ENCODE measurements at regions of chr12 and their contacts with region 1.

Region 1: DNA sequence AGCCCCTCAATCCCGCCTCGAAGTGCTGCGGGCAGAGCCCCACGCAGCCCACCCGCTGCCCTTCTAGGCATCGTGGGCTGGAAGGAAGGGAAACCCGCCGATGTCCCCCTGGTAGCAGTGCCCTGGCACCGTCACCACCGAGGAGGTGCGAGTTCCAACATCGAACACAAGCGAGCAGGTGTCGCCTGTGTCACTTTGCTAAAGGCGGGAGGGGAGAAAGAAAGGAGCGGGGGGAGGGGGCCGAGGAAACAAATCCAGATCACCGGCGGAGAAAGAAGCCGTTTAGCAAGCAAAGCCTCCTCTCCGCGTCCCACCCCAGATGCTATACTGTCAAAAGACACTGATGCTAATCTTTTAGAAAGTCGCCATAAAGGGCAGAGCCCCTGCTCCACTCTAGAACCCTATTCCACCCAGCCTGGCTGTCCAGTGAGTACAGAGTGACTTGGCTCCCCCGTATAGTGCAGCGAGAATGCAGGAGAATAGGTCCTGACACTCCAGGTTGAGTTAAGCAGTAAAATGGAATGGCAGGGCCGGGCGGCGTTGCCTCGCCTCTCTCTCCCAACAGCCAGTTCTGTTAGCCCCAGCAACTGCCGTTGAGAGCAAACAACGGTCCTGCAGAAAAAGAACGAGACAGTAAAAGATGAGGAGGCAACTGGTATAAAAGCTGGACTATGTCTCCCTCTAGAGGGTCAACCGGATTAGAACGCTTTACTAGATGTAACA is 67.9 kb upstream of the USP15 start:
- DNase-seq: peak in 1 of 2 donors; percentile 47
- ATAC-seq: peak; percentile 58 to 93 (median 88)
- H3K4me3 ChIP-seq: peak overlapping the region; percentile 16 to 51 (median 36)
- H3K27ac ChIP-seq: no peak overlapping the region
- H3K4me1 ChIP-seq: peaks cover 15 to 30% (median 21%) of the 10 kb centered on the region in 9 donors
- H3K27me3 ChIP-seq: peaks cover 19 to 62% (median 37%) of the 10 kb centered on the region in 7 donors
- CTCF ChIP-seq: peak; percentile 24 to 78 (median 73)

Region 2: GRCh38 chr12:62006076-62006732 is 186.1 kb before region 1 on chr12:
- intact Hi-C with region 1: loop called in 1 of 10 experiments (anchors 10 kb)
- DNase-seq: no peak
- ATAC-seq: no peak
- H3K4me3 ChIP-seq: no peak overlapping the region
- H3K27ac ChIP-seq: no peak overlapping the region
- H3K4me1 ChIP-seq: peaks cover 0 to 3% (median 0%) of the 10 kb centered on the region in 9 donors
- H3K27me3 ChIP-seq: no peaks in the 10 kb centered on the region
- CTCF ChIP-seq: peak; percentile 28 to 74 (median 70)

Region 3: GRCh38 chr12:62128175-62128975 is 64.0 kb before region 1 on chr12:
- intact Hi-C with region 1: no loop called
- DNase-seq: no peak
- ATAC-seq: no peak
- H3K4me3 ChIP-seq: no peak overlapping the region
- H3K27ac ChIP-seq: no peak overlapping the region
- H3K4me1 ChIP-seq: no peaks in the 10 kb centered on the region
- H3K27me3 ChIP-seq: peaks cover 0 to 3% (median 0%) of the 10 kb centered on the region in 7 donors
- CTCF ChIP-seq: no peak